Posterior cingulate gyrus (tissue), 11 donors: ENCODE measurements at regions of chr14 and their contacts with region 1.

Region 1: DNA sequence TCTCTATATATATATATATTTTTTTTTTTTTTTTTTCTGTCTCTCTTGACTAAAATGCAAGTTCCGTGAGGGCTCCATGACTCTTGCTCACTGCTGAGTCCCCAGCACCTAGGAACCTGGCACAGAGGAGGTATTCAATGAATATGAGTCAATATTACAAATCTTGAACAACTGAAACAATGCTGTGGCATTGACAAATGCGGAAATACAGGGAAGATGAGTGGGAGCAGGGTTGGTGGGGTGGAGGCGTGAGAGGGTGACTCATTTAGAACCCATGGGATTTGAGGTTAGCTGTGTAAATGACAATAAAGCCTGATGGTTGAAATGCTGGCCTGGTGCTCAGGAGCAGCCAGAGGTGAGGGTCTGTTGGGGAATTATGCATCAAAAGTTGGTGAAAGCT is 121.7 kb upstream of the FUT8 start:
- DNase-seq: no peak

Region 2: DNA sequence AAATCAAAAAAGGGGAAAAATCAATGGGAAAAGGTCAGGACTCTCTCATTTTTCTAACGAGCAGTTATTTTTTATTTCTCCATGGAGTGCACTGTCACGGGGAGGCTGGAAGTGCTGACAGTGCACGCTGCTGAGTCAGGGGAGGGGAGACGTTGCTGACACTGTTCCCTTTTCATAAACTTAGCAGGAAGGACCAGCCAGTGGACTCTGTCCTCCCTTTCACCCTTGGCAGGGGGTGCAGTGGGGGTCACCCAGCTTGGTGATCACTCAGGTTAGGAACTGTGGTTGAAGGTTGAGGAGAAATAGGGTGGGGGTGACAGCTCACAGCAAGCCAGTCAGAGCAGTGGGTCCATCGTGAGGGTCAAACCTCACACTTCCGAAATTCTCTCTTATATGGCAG is 56.1 kb after region 1 on chr14:
- intact Hi-C with region 1: loop called (anchors 10 kb)
- DNase-seq: peak in 2 of 10 donors; percentile 6 to 33